A549 (cell line): ENCODE measurements at regions of chr12 and their contacts with region 1.

Region 1: DNA sequence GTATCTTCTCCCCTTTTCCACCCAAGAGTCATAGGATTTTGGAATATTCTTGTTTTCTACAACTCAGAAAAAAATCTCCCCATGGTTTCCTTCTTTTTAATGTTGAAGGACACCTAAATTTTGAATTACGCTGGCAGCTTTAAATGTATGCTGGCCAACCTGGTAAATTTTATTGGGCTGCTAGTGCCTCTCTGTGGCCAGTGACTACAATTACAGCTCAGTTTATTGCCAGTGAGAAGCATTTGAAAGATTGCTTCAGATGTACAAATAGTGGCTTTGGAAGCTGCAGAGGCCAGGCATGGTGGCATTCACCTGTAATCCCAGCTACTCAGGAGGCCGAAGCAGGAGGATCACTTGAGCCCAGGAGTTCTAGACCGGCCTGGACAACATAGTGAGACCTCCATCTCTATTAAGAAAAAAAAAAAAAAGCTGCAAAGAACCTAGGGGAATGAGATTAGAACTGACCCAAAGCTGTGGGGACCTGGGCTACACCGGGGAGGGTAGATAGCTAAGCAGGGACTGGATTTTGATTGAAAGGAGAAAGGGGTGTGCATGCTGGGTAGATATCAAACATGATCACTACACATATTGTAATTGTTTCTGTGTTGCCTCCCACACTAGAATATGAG is 7.6 kb upstream of the RAB21 start:
- DNase-seq: peak; percentile 40 to 74
- ATAC-seq: peak; percentile 88 to 94
- H3K4me3 ChIP-seq: no peak overlapping the region
- H3K27ac ChIP-seq: no peak overlapping the region
- H3K4me1 ChIP-seq: no peaks in the 10 kb centered on the region
- CTCF ChIP-seq: peak; percentile 86
- EP300 ChIP-seq: no peak
- POLR2A ChIP-seq: no peak
- RAD21 ChIP-seq: peak; percentile 91 to 94

Region 2: DNA sequence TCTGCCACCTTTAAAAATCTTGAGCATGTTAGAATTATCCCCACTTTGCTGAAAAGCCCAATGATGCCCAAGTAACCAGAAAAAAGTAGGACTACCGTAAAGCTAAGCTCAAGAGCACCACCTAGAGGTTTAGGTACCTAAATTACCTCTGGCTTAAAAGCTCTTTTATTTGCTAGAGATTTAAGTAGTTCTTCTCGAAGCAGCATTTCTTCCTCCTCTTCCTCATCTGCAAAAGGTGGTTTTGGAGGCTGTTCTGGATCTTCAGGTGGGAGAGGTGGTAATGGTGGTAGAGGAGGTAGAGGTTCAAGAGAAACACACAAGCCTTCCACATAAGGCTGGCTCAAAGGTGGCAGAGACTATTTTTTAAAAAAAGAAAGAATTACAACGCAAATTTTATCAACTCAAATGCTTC is 110.4 kb before region 1 on chr12:
- CTCF ChIA-PET with region 1: interaction called, 28 read pairs
- POLR2A ChIA-PET with region 1: no interaction called
- DNase-seq: peak; percentile 36 to 78
- ATAC-seq: peak; percentile 52 to 78; a peak in 5 of 6 replicates
- H3K4me3 ChIP-seq: no peak overlapping the region
- H3K27ac ChIP-seq: no peak overlapping the region
- H3K4me1 ChIP-seq: no peaks in the 10 kb centered on the region
- CTCF ChIP-seq: peak; percentile 81
- EP300 ChIP-seq: no peak
- POLR2A ChIP-seq: no peak
- RAD21 ChIP-seq: peak; percentile 59 to 66; a peak in 4 of 5 replicates

Region 3: GRCh38 chr12:71663561-71664294 is 83.4 kb before region 1 on chr12 and contains the start of gene ZFC3H1:
- CTCF ChIA-PET with region 1: interaction called, 9 read pairs
- POLR2A ChIA-PET with region 1: interaction called, 17 read pairs
- DNase-seq: peak; percentile 93 to 99
- ATAC-seq: peak; percentile 93 to 96
- H3K4me3 ChIP-seq: peak within 1 kb of the TSS; percentile 69
- H3K27ac ChIP-seq: peak within 1 kb of the TSS; percentile 84 to 92
- H3K4me1 ChIP-seq: peaks cover 18% of the 10 kb centered on the region; the same call in 2 of the 3 replicates
- CTCF ChIP-seq: peak; percentile 21; the same call in 1 of the 3 replicates
- EP300 ChIP-seq: no peak
- POLR2A ChIP-seq: peak; percentile 92
- RAD21 ChIP-seq: no peak
- polyA plus RNA-seq, gene ZFC3H1: 45.2 and 58.3 TPM in 2 replicates

Region 4: DNA sequence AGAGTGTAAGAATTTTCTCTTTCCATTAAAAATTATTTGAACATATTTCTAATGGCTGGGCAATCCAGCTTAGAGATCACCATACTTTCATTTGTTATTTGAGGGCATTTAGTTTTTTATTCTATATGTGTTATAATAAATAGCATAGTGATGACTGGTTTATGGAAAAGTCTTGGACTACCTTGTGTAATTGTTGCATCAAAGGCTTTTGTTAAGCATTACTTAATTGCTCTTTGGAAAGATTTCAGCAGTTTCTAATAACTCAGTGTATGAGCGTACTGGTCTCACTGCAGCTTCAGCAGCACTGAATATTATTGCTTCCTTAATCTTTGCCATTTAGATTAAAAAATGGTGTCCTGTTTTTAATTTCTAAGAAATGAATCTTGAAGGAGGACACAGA is 38.4 kb before region 1 on chr12:
- CTCF ChIA-PET with region 1: interaction called, 10 read pairs
- POLR2A ChIA-PET with region 1: no interaction called
- DNase-seq: no peak
- ATAC-seq: no peak
- H3K4me3 ChIP-seq: no peak overlapping the region
- H3K27ac ChIP-seq: no peak overlapping the region
- H3K4me1 ChIP-seq: peaks cover 15% of the 10 kb centered on the region
- CTCF ChIP-seq: no peak
- EP300 ChIP-seq: no peak
- POLR2A ChIP-seq: no peak
- RAD21 ChIP-seq: no peak

Region 5: GRCh38 chr12:71799106-71799505 is 52.0 kb after region 1 on chr12:
- CTCF ChIA-PET with region 1: no interaction called
- POLR2A ChIA-PET with region 1: no interaction called
- DNase-seq: no peak
- ATAC-seq: peak; percentile 50 to 57; a peak in 5 of 6 replicates
- H3K4me3 ChIP-seq: no peak overlapping the region
- H3K27ac ChIP-seq: no peak overlapping the region
- H3K4me1 ChIP-seq: no peaks in the 10 kb centered on the region
- CTCF ChIP-seq: no peak
- EP300 ChIP-seq: no peak
- POLR2A ChIP-seq: no peak
- RAD21 ChIP-seq: no peak